GM12878 (cell line): ENCODE measurements at regions of chr4 and their contacts with region 1.

Region 1: GRCh38 chr4:94621491-94622080 is 136.2 kb upstream of the BMPR1B start:
- DNase-seq: no peak
- ATAC-seq: peak; percentile 75
- H3K4me3 ChIP-seq: no peak overlapping the region
- H3K27ac ChIP-seq: no peak overlapping the region
- H3K4me1 ChIP-seq: no peaks in the 10 kb centered on the region
- H3K27me3 ChIP-seq: no peaks in the 10 kb centered on the region
- CTCF ChIP-seq: peak; percentile 58 to 68 (median 68)
- EP300 ChIP-seq: no peak
- POLR2A ChIP-seq: no peak
- RAD21 ChIP-seq: peak; percentile 74

Region 2: DNA sequence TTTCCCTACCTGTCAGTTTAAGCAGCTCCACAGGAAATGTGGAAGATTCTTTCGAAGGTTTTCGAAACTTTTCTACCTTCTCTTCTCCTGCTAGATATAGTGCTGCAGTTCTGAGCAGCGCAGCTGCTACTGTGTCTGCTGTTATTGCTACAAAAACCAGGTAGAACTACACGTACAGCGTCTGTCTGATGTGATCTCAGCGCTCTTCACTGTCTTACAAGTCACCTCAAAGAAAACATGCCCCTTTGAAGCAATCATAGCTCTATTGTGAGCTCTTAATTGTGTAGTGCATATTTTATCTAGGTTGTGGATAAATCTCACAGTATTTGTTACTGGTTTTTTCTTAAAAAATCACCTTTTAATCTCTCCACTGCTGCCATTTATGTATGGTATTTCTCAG is 11.4 kb before region 1 on chr4:
- CTCF ChIA-PET with region 1: interaction called, 21 read pairs
- POLR2A ChIA-PET with region 1: interaction called, 3 read pairs
- RAD21 ChIA-PET with region 1: no interaction called
- SMC1A ChIA-PET with region 1: interaction called, 4 read pairs
- in situ Hi-C with region 1: no loop called
- intact Hi-C with region 1: no loop called
- DNase-seq: no peak
- ATAC-seq: no peak
- H3K4me3 ChIP-seq: no peak overlapping the region
- H3K27ac ChIP-seq: no peak overlapping the region
- H3K4me1 ChIP-seq: no peaks in the 10 kb centered on the region
- H3K27me3 ChIP-seq: no peaks in the 10 kb centered on the region
- CTCF ChIP-seq: no peak
- EP300 ChIP-seq: no peak
- POLR2A ChIP-seq: no peak
- RAD21 ChIP-seq: no peak

Region 3: DNA sequence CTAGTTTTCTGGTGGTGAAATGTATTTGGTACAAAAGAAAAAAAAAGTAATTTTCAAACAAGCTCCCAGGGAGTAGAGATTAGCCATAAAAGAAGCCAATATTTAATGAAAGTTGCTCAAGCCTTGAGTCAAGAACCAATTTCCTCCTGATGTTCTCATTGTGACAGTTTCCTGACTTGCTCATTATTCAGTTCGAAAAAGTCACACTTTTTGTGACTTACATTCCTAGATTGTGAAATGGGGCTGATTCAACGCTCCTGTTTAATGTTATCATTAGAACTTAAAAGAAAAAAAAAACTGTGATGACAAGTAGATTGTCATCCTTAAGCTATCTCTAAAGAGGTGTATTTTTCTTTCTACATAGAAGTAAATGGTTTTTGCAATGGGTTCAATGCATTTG is 13.6 kb after region 1 on chr4:
- CTCF ChIA-PET with region 1: interaction called, 17 read pairs
- POLR2A ChIA-PET with region 1: no interaction called
- RAD21 ChIA-PET with region 1: no interaction called
- SMC1A ChIA-PET with region 1: interaction called, 6 read pairs
- in situ Hi-C with region 1: no loop called
- intact Hi-C with region 1: no loop called
- DNase-seq: no peak
- ATAC-seq: no peak
- H3K4me3 ChIP-seq: no peak overlapping the region
- H3K27ac ChIP-seq: no peak overlapping the region
- H3K4me1 ChIP-seq: no peaks in the 10 kb centered on the region
- H3K27me3 ChIP-seq: no peaks in the 10 kb centered on the region
- CTCF ChIP-seq: no peak
- EP300 ChIP-seq: no peak
- POLR2A ChIP-seq: no peak
- RAD21 ChIP-seq: no peak

Region 4: DNA sequence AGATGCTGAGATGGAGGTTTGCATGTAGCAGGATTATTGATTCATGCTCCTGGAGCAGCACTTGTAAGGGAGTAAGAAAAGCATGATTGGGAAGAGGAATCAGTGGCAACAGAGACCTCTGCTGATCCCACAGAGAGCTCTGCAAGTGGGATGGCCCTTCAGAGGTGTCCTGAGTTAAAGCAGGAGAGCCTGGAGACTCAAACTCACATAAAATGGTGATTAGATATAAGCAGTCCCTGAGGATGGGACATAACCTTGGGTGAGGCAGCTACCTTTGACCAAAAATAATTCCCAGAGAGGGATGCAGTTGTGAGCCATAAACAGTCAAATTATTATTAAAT is 110.7 kb after region 1 on chr4:
- CTCF ChIA-PET with region 1: interaction called, 20 read pairs
- POLR2A ChIA-PET with region 1: no interaction called
- RAD21 ChIA-PET with region 1: interaction called, 5 read pairs
- SMC1A ChIA-PET with region 1: interaction called, 4 read pairs
- in situ Hi-C with region 1: no loop called
- intact Hi-C with region 1: loop called (anchors 5 kb)
- DNase-seq: no peak
- ATAC-seq: no peak
- H3K4me3 ChIP-seq: no peak overlapping the region
- H3K27ac ChIP-seq: no peak overlapping the region
- H3K4me1 ChIP-seq: no peaks in the 10 kb centered on the region
- H3K27me3 ChIP-seq: no peaks in the 10 kb centered on the region; a peak in 1 of 4 replicates
- CTCF ChIP-seq: no peak
- EP300 ChIP-seq: no peak
- POLR2A ChIP-seq: no peak
- RAD21 ChIP-seq: no peak

Region 5: DNA sequence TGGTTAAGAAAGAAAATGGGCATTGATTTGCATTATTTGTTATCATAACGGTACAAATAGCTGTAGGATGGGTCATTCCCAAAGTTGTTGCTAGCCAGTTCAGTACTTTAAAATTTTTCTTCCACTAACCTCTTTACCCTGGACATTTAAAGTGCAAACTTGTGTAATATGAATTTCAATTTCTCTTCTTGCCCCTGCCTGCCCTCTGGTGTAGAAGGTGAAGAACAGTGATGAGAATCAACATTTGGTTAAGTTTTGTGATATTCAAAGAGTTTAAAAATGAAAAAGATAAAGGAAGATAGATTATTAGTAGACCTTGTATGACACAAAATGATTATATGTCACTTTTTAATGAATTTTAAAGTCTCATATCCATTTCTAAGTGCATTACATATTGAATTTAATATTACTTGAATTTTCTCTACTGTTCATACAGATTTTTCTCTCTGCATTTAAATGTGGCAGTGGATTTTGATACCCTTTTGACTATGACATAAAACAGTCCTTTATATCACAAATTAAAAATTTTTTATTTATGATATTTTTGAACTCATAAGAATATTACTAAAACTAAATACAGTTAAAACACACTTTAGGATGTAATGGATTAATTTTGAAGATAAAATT is 473.9 kb after region 1 on chr4:
- CTCF ChIA-PET with region 1: interaction called, 4 read pairs
- POLR2A ChIA-PET with region 1: no interaction called
- RAD21 ChIA-PET with region 1: no interaction called
- SMC1A ChIA-PET with region 1: interaction called, 3 read pairs
- in situ Hi-C with region 1: no loop called
- intact Hi-C with region 1: loop called (anchors 2 kb)
- DNase-seq: no peak
- ATAC-seq: no peak
- H3K4me3 ChIP-seq: no peak overlapping the region
- H3K27ac ChIP-seq: no peak overlapping the region
- H3K4me1 ChIP-seq: no peaks in the 10 kb centered on the region
- H3K27me3 ChIP-seq: no peaks in the 10 kb centered on the region
- CTCF ChIP-seq: peak in 2 of 3 experiments; percentile 11 to 19; a peak in 1 of 6 replicates
- EP300 ChIP-seq: no peak
- POLR2A ChIP-seq: no peak
- RAD21 ChIP-seq: peak; percentile 40; the same call in 1 of the 2 replicates

Region 6: DNA sequence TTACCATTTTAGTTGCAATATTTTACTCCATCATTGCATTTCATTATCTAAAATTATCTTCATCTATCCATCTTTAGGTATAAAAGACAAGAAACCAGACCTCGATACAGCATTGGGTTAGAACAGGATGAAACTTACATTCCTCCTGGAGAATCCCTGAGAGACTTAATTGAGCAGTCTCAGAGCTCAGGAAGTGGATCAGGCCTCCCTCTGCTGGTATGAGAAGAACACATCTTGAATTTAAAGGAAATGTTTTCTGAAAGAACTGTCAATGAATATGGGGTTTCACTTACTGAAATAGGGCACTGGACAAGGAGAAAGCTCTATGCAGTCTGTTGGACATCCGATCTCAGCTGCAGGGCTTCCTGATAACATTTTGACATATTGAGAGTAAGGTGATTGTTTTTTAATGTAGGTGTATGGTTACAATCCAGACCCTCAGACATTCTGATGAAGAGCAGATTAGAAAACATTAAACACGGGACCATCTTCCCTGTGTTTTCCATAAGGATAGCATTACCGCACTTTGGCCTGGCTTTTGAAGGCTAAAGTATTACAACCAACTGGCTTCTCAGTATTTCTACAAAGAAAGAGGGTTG is 503.4 kb after region 1 on chr4:
- CTCF ChIA-PET with region 1: interaction called, 6 read pairs
- POLR2A ChIA-PET with region 1: no interaction called
- RAD21 ChIA-PET with region 1: no interaction called
- SMC1A ChIA-PET with region 1: interaction called, 3 read pairs
- in situ Hi-C with region 1: loop called (anchors 10 kb)
- intact Hi-C with region 1: loop called (anchors 2 kb)
- DNase-seq: no peak
- ATAC-seq: peak; percentile 42; the same call in 1 of the 3 replicates
- H3K4me3 ChIP-seq: no peak overlapping the region
- H3K27ac ChIP-seq: no peak overlapping the region
- H3K4me1 ChIP-seq: no peaks in the 10 kb centered on the region
- H3K27me3 ChIP-seq: no peaks in the 10 kb centered on the region
- CTCF ChIP-seq: peak; percentile 4 to 32 (median 16); a peak in 3 of 6 replicates
- EP300 ChIP-seq: no peak
- POLR2A ChIP-seq: no peak
- RAD21 ChIP-seq: peak; percentile 19; the same call in 1 of the 2 replicates